ENCODE measurements at regions of chr22 and their contacts with region 1.

Region 1: GRCh38 chr22:37043828-37044538 is 7.6 kb upstream of the KCTD17 start:
- DNase-seq: peak; percentile 75
- H3K4me3 Mint-ChIP-seq: no peak overlapping the region
- H3K27ac Mint-ChIP-seq: no peak overlapping the region
- H3K4me1 Mint-ChIP-seq: peaks cover 25% of the 10 kb centered on the region
- H3K27me3 Mint-ChIP-seq: no peaks in the 10 kb centered on the region

Region 2: DNA sequence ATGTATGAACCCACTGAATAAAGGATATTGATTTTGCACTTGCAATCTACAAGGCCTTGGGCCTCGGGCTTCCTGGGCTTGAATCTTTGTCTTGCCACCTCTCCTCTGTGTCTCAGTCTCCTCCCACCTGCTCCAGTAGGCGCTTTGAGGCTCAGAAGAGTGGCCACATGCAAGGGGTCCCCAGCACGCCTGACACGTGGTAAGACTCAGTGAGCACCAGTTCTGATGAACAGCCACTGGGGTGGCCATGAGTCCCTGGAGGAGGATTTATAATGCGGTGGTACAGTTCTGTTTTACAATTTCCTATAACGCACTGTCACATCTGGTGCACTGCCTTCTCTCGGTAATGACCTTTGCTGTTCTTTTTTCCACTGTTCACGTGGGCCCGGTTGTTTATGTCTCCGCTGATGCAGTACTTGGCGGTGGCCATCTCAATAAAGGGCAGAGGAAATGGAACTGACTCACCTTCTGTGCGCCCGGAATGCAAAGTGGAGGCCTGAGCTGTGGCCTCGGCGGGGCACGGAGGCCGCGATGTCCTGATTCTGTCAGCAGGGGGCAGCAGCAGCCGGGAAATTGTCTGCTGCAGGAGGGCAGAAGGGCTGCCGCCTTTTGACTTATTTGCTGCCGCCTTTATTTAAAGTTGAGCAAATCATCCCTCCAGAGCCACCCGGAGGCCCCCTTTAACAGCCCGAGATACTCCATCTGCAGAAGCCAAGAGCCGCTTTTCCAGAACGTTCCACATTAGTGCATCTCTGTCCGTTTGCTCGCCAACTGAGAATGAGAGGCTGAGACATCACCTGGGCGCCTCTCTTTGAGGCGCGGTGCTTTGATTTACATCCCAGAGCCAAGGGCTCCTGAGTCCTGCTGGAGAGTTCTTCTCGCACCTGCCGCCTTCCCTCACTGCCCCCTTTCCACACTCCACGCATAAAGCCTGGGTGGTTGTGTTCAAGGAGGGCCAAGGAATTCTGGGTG is 262.0 kb before region 1 on chr22:
- CTCF ChIA-PET with region 1: interaction called, 7 read pairs
- POLR2A ChIA-PET with region 1: no interaction called
- intact Hi-C with region 1: loop called (anchors 10 kb)
- DNase-seq: peak; percentile 96
- H3K4me3 Mint-ChIP-seq: peak overlapping the region; percentile 49
- H3K27ac Mint-ChIP-seq: peak overlapping the region; percentile 76
- H3K4me1 Mint-ChIP-seq: peaks cover 32% of the 10 kb centered on the region
- H3K27me3 Mint-ChIP-seq: peaks cover 1% of the 10 kb centered on the region

Region 3: DNA sequence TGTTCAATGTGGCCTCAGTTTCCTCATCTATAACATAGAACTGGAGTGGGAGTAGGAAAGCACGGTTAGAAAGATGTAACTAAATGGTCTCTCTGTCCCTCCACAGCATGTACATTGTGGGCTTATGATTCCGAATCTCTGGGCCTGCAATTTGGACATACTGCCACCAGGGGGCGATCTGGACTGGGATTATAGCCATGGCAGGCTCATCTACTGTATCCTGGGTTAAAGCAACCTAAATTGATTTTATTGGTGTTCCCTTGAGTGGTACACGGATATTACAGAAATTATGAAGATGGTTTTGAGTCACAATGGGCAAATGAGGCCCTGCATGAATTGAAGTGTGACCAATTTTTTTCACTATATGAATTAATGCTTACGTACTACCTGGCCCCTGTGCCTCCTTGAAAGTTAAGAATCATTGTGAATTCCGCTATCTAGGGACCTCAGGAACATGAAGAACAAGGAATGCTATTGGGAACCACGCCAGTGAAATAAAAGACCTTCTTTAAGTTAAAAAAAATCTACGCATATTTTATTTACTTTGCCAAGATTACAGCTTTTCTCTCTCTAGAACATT is 57.7 kb before region 1 on chr22:
- CTCF ChIA-PET with region 1: interaction called, 4 read pairs
- POLR2A ChIA-PET with region 1: no interaction called
- intact Hi-C with region 1: loop called (anchors 1 kb)
- DNase-seq: peak; percentile 80
- H3K4me3 Mint-ChIP-seq: no peak overlapping the region
- H3K27ac Mint-ChIP-seq: no peak overlapping the region
- H3K4me1 Mint-ChIP-seq: peaks cover 14% of the 10 kb centered on the region
- H3K27me3 Mint-ChIP-seq: peaks cover 20% of the 10 kb centered on the region

Region 4: GRCh38 chr22:37002633-37003032 is 41.4 kb before region 1 on chr22:
- CTCF ChIA-PET with region 1: no interaction called
- POLR2A ChIA-PET with region 1: no interaction called
- intact Hi-C with region 1: no loop called
- DNase-seq: no peak
- H3K4me3 Mint-ChIP-seq: no peak overlapping the region
- H3K27ac Mint-ChIP-seq: no peak overlapping the region
- H3K4me1 Mint-ChIP-seq: no peaks in the 10 kb centered on the region
- H3K27me3 Mint-ChIP-seq: peaks cover 7% of the 10 kb centered on the region

Region 5: DNA sequence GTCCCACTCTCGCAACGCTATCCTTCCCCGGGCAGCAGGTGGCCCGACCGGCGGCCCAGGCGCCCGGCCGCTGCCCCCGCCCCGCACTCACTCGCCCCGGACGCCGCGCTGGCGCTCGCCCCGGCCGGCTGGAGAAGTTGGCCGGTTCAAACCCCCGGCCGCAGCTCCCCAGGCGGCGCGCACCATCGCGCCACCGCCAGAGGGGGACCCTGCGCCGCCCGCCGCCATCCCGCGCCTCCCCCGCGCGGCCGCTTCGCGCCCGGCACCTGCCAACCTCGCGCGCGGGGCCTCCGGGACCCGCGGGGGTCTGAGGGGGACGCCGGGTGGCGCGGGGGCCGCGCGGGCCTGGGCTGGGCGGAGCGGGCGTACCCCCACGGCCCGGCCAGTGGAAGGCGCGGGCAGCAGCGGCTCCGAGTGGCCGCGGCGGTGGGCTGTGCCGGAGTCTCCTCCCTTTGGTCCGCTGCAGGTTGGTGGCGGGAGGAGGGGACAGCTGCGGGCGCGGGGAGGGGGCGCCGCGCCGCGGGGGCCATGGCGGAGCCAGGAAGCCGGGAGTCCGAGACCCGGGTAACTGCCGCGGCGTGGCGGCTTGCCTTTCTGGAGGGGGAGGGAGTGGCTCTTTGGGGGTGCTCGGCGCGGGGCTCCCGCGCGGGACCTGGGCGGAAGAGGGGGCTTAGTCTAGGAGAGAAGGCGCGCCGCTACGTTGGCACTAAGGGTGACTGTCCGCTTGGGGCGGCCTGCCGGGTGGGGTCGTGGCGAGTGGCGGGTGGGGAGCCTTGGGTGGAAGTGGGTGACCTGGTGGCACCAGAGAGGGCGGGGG is 24.5 kb before region 1 on chr22 and contains the starts of genes MPST and TST:
- CTCF ChIA-PET with region 1: interaction called, 9 read pairs
- POLR2A ChIA-PET with region 1: no interaction called
- intact Hi-C with region 1: loop called (anchors 2 kb)
- DNase-seq: peak; percentile 50
- H3K4me3 Mint-ChIP-seq: peak within 1 kb of the TSS; percentile 89
- H3K27ac Mint-ChIP-seq: no peak within 1 kb of the TSS
- H3K4me1 Mint-ChIP-seq: peaks cover 9% of the 10 kb centered on the region
- H3K27me3 Mint-ChIP-seq: peaks cover 3% of the 10 kb centered on the region
- total RNA-seq, gene MPST: 16.9 to 17.6 TPM
- total RNA-seq, gene TST: 5.5 TPM

Region 6: DNA sequence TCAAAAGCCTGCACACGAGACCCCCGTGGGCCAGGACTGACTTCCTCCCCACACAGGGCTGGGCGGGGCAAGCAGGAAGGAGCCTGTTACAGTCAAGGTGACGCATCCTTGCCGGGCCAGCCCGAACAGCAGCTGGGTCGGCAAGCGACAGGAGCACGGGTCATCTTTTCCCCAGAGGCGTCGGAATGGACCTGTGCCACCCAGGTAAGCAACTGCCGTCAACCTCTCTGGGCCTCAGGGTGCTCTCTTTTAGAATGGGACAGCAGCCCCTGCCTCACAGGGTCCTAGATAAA is 238.3 kb after region 1 on chr22 and contains the start of gene CYTH4:
- CTCF ChIA-PET with region 1: no interaction called
- POLR2A ChIA-PET with region 1: no interaction called
- intact Hi-C with region 1: no loop called
- DNase-seq: peak; percentile 89
- H3K4me3 Mint-ChIP-seq: peak within 1 kb of the TSS; percentile 82
- H3K27ac Mint-ChIP-seq: peak within 1 kb of the TSS; percentile 94
- H3K4me1 Mint-ChIP-seq: peaks cover 48% of the 10 kb centered on the region
- H3K27me3 Mint-ChIP-seq: peaks cover 2% of the 10 kb centered on the region
- total RNA-seq, gene CYTH4: 58.7 to 60.5 TPM